Activated T-helper 2 cell treated with anti-CD3 and anti-CD28 coated beads, Interferon-gamma antibody, Interleukin-2, Interleukin-4, amounts not matched to agents 10 μg/mL and 5 μg/mL and 100 μg/mL, durations not matched to agents 14 hours and 24 hours and 36 hours (primary cell): ENCODE measurements at regions of chr3 and their contacts with region 1.

Region 1: DNA sequence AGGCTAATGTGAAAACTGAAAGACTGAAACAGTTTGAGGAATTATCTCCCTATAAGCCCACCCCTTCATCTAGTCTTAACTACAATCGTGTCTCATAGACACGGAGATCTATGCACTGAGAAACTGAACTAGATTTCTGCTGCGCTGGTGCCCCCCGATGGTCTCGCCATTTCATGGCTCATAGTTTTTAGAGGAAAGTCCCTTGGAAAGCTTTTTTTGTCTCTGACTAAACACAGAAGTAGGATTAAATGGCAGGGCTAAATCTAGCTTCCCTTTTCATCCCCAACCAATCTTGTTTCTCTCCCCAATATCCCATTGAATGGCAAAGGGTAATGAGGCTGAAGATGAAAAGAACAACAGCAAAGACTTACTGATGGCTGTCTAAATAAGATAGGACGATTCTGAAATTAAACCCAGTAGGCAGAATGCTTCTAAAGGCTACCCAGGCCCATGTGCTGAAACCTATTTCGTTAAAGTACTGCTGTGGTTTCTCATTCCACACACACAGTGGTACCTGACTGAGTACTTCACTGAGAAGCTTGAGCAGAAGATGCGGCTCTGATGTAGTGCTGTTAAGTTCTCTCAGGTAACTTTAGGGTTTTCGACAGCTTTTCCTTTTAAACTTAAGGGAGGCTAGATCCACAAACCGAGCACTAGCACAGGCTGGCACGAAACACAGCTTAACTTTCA is 142.7 kb downstream of the GADL1 start:
- DNase-seq: peak; percentile 24
- H3K4me3 Mint-ChIP-seq: no peak overlapping the region
- H3K27ac Mint-ChIP-seq: no peak overlapping the region
- H3K4me1 Mint-ChIP-seq: peaks cover 38% of the 10 kb centered on the region
- H3K27me3 Mint-ChIP-seq: peaks cover 3% of the 10 kb centered on the region

Region 2: DNA sequence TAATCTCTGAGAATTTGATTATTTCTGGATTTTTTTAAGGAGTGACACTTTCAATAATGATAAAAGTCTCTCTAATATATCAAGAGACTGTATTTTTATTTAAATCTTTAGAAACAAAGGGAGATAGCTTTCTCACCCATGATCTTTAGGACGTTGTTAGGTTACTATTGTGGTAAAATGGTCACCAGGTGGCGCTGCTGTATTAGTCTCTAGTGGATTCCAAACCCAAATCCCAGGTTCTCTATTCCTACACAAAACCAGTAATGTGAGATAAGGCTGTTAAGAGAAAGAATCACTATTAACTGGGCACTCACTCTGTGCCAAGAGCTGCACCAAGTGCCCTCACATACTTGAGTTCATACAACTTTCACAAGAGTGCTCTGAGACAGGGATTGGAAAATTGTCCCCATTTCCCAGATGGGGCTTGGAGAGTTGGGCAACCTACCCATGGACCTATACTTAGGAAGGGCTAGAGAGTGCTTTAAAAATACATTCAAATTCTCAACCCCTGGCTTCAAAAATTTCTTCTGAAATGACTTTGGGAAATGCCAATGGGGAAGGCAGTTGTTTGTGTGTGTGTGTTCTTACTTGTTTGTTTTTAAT is 738.7 kb before region 1 on chr3:
- intact Hi-C with region 1: loop called (anchors 10 kb)
- DNase-seq: no peak
- H3K4me3 Mint-ChIP-seq: no peak overlapping the region
- H3K27ac Mint-ChIP-seq: no peak overlapping the region
- H3K4me1 Mint-ChIP-seq: peaks cover 6% of the 10 kb centered on the region
- H3K27me3 Mint-ChIP-seq: peaks cover 4% of the 10 kb centered on the region

Region 3: GRCh38 chr3:30042274-30042859 is 709.4 kb before region 1 on chr3:
- intact Hi-C with region 1: loop called (anchors 2 kb)
- DNase-seq: peak; percentile 18
- H3K4me3 Mint-ChIP-seq: no peak overlapping the region
- H3K27ac Mint-ChIP-seq: no peak overlapping the region
- H3K4me1 Mint-ChIP-seq: no peaks in the 10 kb centered on the region
- H3K27me3 Mint-ChIP-seq: peaks cover 37% of the 10 kb centered on the region

Region 4: DNA sequence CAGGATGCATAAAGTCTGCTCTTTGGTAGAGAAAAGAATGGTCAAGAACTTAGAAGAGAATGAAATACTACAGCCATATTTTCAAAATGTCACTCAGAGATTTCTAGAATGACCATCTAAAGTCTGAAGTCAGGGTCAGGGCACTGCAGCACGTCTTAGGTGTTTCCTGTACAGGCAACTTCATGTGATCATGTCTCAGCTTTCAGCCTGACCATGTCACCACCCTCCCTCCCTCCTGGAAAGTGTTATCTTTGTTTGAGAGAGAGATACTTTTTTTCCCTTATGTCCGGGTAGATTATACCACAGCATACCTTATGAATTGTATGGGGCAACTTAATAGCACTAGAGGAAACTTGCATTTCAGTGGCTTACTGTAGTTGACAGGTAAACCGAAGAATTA is 703.3 kb before region 1 on chr3:
- intact Hi-C with region 1: loop called (anchors 2 kb)
- DNase-seq: no peak
- H3K4me3 Mint-ChIP-seq: no peak overlapping the region
- H3K27ac Mint-ChIP-seq: no peak overlapping the region
- H3K4me1 Mint-ChIP-seq: no peaks in the 10 kb centered on the region
- H3K27me3 Mint-ChIP-seq: peaks cover 20% of the 10 kb centered on the region

Region 5: GRCh38 chr3:30112902-30113484 is 638.8 kb before region 1 on chr3:
- intact Hi-C with region 1: loop called (anchors 5 kb)
- DNase-seq: no peak
- H3K4me3 Mint-ChIP-seq: no peak overlapping the region
- H3K27ac Mint-ChIP-seq: no peak overlapping the region
- H3K4me1 Mint-ChIP-seq: peaks cover 3% of the 10 kb centered on the region
- H3K27me3 Mint-ChIP-seq: peaks cover 32% of the 10 kb centered on the region

Region 6: DNA sequence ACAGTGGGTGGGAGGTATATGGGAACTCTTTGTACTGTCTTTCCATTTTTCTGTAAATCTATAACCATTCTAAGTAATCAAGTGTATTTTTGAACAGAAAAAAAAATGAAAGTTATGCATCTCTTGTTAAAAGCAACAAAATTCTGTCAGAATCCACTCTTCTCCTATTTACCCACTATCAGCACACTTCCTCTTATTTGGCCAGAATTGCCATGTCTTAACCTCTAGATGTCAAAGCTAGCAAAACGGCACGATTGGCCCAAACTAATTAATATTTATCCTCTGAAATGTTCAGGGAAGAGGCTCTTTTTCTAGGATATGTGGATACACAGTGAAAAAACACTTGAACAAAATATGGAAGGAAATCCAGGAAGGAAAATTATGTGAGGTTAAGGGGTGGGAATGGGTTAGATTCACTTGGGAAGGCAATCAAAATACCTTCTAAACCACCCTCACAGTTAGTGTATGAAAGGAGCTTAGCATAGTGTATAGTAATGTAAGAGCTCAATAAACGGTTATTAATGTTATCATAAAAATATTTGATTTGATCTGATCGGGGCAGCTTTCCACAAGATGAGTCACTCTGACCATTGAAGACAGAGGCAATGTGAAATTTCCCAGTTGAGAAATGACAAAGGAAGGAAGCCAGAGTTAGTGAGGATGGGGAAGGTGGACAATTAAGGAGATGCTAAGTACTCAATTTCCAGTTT is 165.5 kb before region 1 on chr3:
- intact Hi-C with region 1: no loop called
- DNase-seq: no peak
- H3K4me3 Mint-ChIP-seq: no peak overlapping the region
- H3K27ac Mint-ChIP-seq: no peak overlapping the region
- H3K4me1 Mint-ChIP-seq: no peaks in the 10 kb centered on the region
- H3K27me3 Mint-ChIP-seq: no peaks in the 10 kb centered on the region

Region 7: DNA sequence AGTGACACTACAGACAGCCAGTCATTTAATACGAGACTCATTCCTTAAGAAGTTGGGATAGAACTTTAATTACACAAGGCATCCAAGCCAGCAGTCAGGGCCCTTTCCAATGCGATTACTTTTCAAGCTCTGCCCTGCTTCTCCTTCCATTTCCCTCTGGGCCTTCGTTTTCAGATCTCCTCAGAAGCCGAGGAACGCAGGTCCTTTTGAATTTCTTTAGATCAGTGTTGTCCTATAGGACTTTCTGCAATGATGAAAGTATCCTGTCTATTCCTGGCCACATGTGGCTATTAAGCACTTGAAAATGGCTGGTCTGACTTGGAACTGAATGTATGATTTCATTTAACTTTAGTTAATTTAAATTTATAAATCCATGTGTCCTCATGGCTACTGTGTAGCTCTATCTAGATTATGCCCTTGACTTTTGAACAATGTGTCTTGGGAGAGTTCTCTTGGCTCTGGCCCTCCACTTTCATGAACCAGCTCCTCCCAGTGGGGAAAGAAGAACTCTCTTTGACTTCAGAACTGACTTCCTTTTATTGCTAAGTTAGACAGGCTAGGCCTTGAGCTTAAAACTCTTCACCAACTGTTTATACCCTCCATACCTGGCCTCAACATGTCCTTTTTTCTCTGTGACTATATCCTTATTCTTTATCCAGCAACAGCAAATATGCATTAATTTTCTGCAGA is 122.7 kb before region 1 on chr3:
- intact Hi-C with region 1: no loop called
- DNase-seq: no peak
- H3K4me3 Mint-ChIP-seq: peak overlapping the region; percentile 26
- H3K27ac Mint-ChIP-seq: peak overlapping the region; percentile 99
- H3K4me1 Mint-ChIP-seq: peaks cover 77% of the 10 kb centered on the region
- H3K27me3 Mint-ChIP-seq: no peaks in the 10 kb centered on the region

Region 8: GRCh38 chr3:30768703-30769685 is 17.2 kb after region 1 on chr3:
- intact Hi-C with region 1: no loop called
- DNase-seq: peak; percentile 44
- H3K4me3 Mint-ChIP-seq: no peak overlapping the region
- H3K27ac Mint-ChIP-seq: no peak overlapping the region
- H3K4me1 Mint-ChIP-seq: peaks cover 5% of the 10 kb centered on the region
- H3K27me3 Mint-ChIP-seq: peaks cover 40% of the 10 kb centered on the region

Region 9: DNA sequence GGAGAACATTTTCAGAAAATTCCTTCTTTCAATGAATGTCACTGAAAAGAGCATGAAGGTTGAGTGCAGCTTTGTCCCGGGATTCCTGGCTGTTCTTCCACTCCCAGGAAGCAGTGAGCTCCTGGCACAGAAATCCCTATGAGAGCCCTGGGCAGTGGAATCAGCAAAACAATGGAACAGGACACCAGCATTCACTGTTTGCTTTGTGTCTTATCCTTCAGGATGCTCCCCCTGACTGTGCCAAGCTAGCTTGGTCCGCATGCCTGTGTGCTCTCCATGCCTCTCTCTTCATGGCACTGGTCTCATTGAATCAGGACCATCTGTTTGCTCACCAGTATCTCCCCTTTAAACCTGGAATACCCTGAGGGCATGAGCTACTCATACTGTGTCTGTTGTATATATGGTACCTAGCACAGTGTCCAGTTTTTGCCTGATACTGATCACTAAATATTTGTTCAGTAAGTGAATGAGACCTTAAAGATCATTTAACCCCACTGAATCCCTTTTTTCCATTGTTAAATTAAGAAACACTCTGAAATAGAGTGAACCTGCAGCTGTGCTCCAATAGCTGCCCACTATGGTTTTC is 244.8 kb after region 1 on chr3:
- intact Hi-C with region 1: no loop called
- DNase-seq: no peak
- H3K4me3 Mint-ChIP-seq: no peak overlapping the region
- H3K27ac Mint-ChIP-seq: no peak overlapping the region
- H3K4me1 Mint-ChIP-seq: no peaks in the 10 kb centered on the region
- H3K27me3 Mint-ChIP-seq: no peaks in the 10 kb centered on the region